ENCODE measurements at regions of chr13 and their contacts with region 1.

Region 1: GRCh38 chr13:27620377-27621115 is at the start of gene LNX2:
- DNase-seq: peak; percentile 80
- ATAC-seq: peak; percentile 94
- H3K4me3 ChIP-seq: peak within 1 kb of the TSS; percentile 97
- H3K27ac ChIP-seq: peak within 1 kb of the TSS; percentile 84
- H3K4me1 ChIP-seq: peaks cover 8% of the 10 kb centered on the region
- H3K27me3 ChIP-seq: no peaks in the 10 kb centered on the region
- CTCF ChIP-seq: no peak
- EP300 ChIP-seq: no peak
- POLR2A ChIP-seq: peak; percentile 90
- RAD21 ChIP-seq: no peak
- polyA plus RNA-seq, gene LNX2: 1.3 to 1.9 TPM

Region 2: DNA sequence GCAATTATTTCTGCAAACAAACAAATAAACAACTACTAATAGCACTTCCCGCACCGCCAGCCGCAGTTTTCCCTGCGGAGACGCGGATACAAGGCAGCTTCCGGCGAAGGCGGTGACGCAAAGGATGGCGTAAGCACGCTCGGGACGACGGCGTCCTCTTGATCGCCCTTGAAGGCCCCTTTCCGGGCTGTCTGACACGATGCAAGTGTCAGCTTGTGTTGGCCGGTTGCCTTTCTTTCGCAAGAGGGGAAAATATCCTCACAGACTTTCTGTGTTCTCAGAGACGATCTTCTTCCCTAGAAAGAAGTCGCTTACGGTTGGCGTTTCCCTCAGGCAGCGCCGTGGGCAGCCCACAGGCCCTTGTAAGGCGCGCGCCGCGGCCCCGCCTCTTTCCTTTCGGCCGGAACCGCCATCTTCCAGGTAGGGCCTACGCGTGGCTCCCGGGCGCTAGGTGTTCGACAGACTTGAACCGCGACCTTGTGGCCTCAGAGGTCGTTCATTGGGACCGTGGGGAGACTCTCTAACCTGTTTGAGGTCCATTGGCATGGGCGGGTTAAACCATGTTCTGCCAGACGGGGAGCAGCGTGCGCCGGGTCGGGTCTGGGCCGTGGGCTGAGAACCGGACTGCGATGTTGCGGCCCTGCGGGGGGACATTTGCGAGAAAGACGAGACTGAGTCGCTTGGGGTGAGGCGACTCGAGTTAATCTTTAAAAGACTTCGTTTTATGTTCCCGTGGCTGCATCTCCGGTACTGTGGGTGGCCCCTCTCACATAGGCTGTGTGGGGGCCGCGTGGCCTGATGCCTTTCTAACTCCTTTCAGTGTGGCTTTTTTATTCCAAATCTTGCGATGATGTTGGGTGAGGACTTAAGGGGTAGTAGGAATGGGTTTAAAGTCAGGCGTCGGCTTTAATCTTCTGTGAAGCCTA is 369.1 kb before region 1 on chr13 and contains the start of gene RPL21:
- CTCF ChIA-PET with region 1: no interaction called
- POLR2A ChIA-PET with region 1: no interaction called
- RAD21 ChIA-PET with region 1: no interaction called
- SMC1A ChIA-PET with region 1: no interaction called
- in situ Hi-C with region 1: no loop called
- intact Hi-C with region 1: loop called (anchors 5 kb)
- DNase-seq: peak; percentile 86
- ATAC-seq: peak; percentile 90
- H3K4me3 ChIP-seq: peak within 1 kb of the TSS; percentile 94
- H3K27ac ChIP-seq: peak within 1 kb of the TSS; percentile 89
- H3K4me1 ChIP-seq: no peaks in the 10 kb centered on the region
- H3K27me3 ChIP-seq: no peaks in the 10 kb centered on the region
- CTCF ChIP-seq: no peak
- EP300 ChIP-seq: no peak
- POLR2A ChIP-seq: peak; percentile 99
- RAD21 ChIP-seq: no peak
- polyA plus RNA-seq, gene RPL21: 8,593 to 9,760 TPM

Region 3: DNA sequence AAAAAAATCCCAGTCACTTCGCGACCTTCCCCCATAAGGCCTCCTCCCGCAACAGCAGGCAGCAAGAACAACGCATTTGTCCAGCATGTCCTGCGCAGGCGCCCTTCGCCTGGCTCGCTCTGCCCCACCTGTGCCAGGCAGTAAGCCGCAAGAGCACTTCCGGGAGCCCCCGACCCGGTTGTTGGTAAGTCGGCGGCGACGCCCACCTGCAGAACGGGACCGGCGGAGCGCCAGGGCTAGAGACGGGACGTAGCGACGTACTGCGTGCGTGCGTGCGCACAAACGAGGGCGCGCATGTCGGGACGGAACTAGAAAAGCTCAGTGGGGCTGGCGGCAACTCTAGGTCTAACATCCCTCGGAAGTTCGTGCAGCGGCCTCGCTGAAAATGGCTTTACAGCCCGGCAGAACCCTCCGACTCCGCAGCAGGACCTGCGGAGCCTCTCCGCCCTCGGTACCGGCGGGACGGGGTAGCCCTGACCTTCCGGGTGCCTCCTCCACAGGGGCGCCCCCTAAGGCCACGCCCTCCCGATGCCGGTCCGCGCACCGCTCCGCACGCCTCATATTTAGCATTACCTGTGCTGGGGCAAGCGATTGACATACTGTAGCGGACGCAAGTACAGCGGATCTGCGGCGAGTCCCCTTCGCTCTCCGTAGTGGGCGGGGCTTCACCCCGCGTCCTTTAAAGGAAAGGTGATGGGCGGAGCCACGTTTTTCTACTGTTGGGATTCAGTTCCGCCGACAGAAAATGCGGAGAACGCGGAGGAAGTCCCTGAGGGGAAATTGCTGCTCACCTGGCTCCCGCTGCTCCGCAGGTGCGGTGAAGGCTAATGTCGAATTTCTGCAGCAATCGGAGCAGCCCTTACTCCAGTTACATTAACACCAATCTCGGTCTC is 170.4 kb before region 1 on chr13 and contains the start of gene MTIF3:
- CTCF ChIA-PET with region 1: no interaction called
- POLR2A ChIA-PET with region 1: interaction called, 6 read pairs
- RAD21 ChIA-PET with region 1: interaction called, 4 read pairs
- SMC1A ChIA-PET with region 1: no interaction called
- in situ Hi-C with region 1: loop called (anchors 5 kb)
- intact Hi-C with region 1: loop called (anchors 1 kb)
- DNase-seq: peak; percentile 87
- ATAC-seq: peak; percentile 93
- H3K4me3 ChIP-seq: peak within 1 kb of the TSS; percentile 87
- H3K27ac ChIP-seq: peak within 1 kb of the TSS; percentile 86
- H3K4me1 ChIP-seq: peaks cover 11% of the 10 kb centered on the region
- H3K27me3 ChIP-seq: no peaks in the 10 kb centered on the region
- CTCF ChIP-seq: no peak
- EP300 ChIP-seq: no peak
- POLR2A ChIP-seq: peak; percentile 98
- RAD21 ChIP-seq: 0 out of 2 replicates have a peak, but pooled peaks have one; percentile 16
- polyA plus RNA-seq, gene MTIF3: 64.7 to 73.9 TPM

Region 4: GRCh38 chr13:27569405-27569804 is 51.1 kb before region 1 on chr13:
- CTCF ChIA-PET with region 1: interaction called, 4 read pairs
- POLR2A ChIA-PET with region 1: interaction called, 7 read pairs
- RAD21 ChIA-PET with region 1: interaction called, 4 read pairs
- SMC1A ChIA-PET with region 1: interaction called, 11 read pairs
- in situ Hi-C with region 1: no loop called
- intact Hi-C with region 1: no loop called
- DNase-seq: peak; percentile 24
- ATAC-seq: peak; percentile 92
- H3K4me3 ChIP-seq: no peak overlapping the region
- H3K27ac ChIP-seq: no peak overlapping the region
- H3K4me1 ChIP-seq: no peaks in the 10 kb centered on the region
- H3K27me3 ChIP-seq: no peaks in the 10 kb centered on the region
- CTCF ChIP-seq: no peak
- EP300 ChIP-seq: peak in 1 of 2 experiments; percentile 44; a peak in 1 of 4 replicates
- POLR2A ChIP-seq: no peak
- RAD21 ChIP-seq: no peak

Region 5: GRCh38 chr13:27638521-27638920 is 18.0 kb after region 1 on chr13:
- CTCF ChIA-PET with region 1: interaction called, 4 read pairs
- POLR2A ChIA-PET with region 1: interaction called, 7 read pairs
- RAD21 ChIA-PET with region 1: interaction called, 3 read pairs
- SMC1A ChIA-PET with region 1: interaction called, 16 read pairs
- in situ Hi-C with region 1: no loop called
- intact Hi-C with region 1: no loop called
- DNase-seq: no peak
- ATAC-seq: no peak
- H3K4me3 ChIP-seq: no peak overlapping the region
- H3K27ac ChIP-seq: no peak overlapping the region
- H3K4me1 ChIP-seq: no peaks in the 10 kb centered on the region
- H3K27me3 ChIP-seq: no peaks in the 10 kb centered on the region
- CTCF ChIP-seq: no peak
- EP300 ChIP-seq: no peak
- POLR2A ChIP-seq: no peak
- RAD21 ChIP-seq: no peak